ENCODE measurements at regions of chr19 and their contacts with region 1.

Region 1: DNA sequence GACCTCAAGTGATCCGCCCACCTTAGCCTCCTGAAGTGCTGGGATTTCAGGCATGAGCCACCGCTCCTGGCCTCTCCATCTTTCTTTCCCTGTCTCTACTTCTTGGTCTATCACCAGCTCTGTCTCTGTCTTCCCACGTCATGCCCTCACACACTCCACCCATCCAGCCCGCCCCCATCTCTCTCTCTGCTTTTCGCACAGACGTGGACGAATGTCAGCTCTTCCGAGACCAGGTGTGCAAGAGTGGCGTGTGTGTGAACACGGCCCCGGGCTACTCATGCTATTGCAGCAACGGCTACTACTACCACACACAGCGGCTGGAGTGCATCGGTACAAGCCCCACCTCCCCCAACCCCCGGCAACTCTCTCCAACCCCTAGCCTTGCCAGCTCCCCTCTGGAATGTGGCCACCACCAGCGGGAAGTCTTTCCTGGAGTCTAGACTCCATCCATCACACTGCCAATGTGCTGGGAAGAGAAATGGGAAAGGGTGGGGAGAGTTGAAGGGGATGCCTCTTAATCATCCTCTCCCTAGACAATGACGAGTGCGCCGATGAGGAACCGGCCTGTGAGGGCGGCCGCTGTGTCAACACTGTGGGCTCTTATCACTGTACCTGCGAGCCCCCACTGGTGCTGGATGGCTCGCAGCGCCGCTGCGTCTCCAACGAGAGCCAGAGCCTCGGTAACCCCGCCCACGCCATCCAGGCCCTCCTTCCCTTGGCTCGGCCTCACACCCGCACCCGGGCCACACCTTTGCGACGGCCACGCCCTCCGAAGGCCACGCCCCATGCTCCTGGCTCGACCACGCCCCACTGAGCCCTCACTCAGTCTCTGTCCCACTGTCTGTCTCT is 22.5 kb downstream of the LTBP4 start:
- H3K4me3 ChIP-seq: peak overlapping the region; percentile 0
- H3K27ac ChIP-seq: peak overlapping the region; percentile 59; the same call in 1 of the 2 replicates
- H3K4me1 ChIP-seq: peaks cover 16% of the 10 kb centered on the region
- CTCF ChIP-seq: no peak

Region 2: GRCh38 chr19:40598121-40598917 is 25.3 kb before region 1 on chr19:
- CTCF ChIA-PET with region 1: interaction called, 158 read pairs
- POLR2A ChIA-PET with region 1: interaction called, 60 read pairs
- H3K4me3 ChIP-seq: peak overlapping the region; percentile 33
- H3K27ac ChIP-seq: peak overlapping the region; percentile 60; the same call in 1 of the 2 replicates
- H3K4me1 ChIP-seq: peaks cover 57% of the 10 kb centered on the region
- CTCF ChIP-seq: peak; percentile 99

Region 3: GRCh38 chr19:40609561-40610395 is 13.8 kb before region 1 on chr19:
- CTCF ChIA-PET with region 1: interaction called, 158 read pairs
- POLR2A ChIA-PET with region 1: interaction called, 61 read pairs
- H3K4me3 ChIP-seq: peak overlapping the region; percentile 30
- H3K27ac ChIP-seq: peak overlapping the region; percentile 52; the same call in 1 of the 2 replicates
- H3K4me1 ChIP-seq: peaks cover 32% of the 10 kb centered on the region
- CTCF ChIP-seq: no peak

Measured in HEK293 (cell line).